CD4-positive, alpha-beta T cell (primary cell): ENCODE measurements at regions of chr6 and their contacts with region 1.

Region 1: GRCh38 chr6:28923318-28924102 is at the start of gene TRIM27:
- DNase-seq: peak; percentile 58 to 90 (median 74)
- ATAC-seq: peak; percentile 78
- H3K4me3 ChIP-seq: peak within 1 kb of the TSS; percentile 98
- H3K4me3 Mint-ChIP-seq: peak within 1 kb of the TSS; percentile 95
- H3K27ac ChIP-seq: peak within 1 kb of the TSS; percentile 67 to 80
- H3K27ac Mint-ChIP-seq: peak within 1 kb of the TSS; percentile 89
- H3K4me1 ChIP-seq: peaks cover 44% of the 10 kb centered on the region
- H3K4me1 Mint-ChIP-seq: peaks cover 42% of the 10 kb centered on the region
- H3K27me3 ChIP-seq: no peaks in the 10 kb centered on the region
- H3K27me3 Mint-ChIP-seq: no peaks in the 10 kb centered on the region
- CTCF ChIP-seq: no peak
- total RNA-seq, gene TRIM27: 11.5 to 13.2 TPM

Region 2: DNA sequence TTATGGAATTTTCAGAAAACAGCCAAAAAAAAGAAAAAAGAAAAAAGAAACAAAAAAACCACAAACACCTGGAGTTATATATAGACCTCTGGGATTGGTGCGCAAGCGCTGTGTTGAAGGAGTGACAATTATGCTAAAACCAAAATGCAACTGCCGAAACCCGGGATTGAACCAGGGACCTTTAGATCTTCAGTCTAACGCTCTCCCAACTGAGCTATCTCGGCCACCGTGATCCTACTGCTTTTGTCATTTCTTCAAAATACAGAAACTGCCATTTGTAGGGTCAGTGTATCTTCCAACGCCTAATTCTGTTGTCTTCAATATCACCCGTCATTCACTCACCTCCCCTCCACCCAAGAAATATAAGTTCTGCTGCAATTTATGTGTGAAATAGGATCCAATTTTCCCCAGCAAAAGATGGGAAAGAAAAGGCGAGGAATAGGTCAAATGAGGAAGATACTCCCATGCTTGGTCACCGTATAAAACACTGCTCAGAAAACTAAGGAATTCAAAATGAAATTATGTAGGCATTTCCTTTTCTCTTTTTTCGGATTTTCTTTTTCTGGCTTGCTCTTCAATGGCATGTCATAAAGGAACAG is 115.7 kb before region 1 on chr6:
- CTCF ChIA-PET with region 1: no interaction called
- POLR2A ChIA-PET with region 1: no interaction called
- intact Hi-C with region 1: no loop called
- DNase-seq: no peak
- ATAC-seq: no peak
- H3K4me3 ChIP-seq: no peak overlapping the region
- H3K4me3 Mint-ChIP-seq: peak overlapping the region; percentile 27
- H3K27ac ChIP-seq: no peak overlapping the region
- H3K27ac Mint-ChIP-seq: no peak overlapping the region
- H3K4me1 ChIP-seq: no peaks in the 10 kb centered on the region
- H3K4me1 Mint-ChIP-seq: no peaks in the 10 kb centered on the region
- H3K27me3 ChIP-seq: peaks cover 75 to 91% of the 10 kb centered on the region in 2 experiments
- H3K27me3 Mint-ChIP-seq: peaks cover 90% of the 10 kb centered on the region
- CTCF ChIP-seq: no peak

Region 3: DNA sequence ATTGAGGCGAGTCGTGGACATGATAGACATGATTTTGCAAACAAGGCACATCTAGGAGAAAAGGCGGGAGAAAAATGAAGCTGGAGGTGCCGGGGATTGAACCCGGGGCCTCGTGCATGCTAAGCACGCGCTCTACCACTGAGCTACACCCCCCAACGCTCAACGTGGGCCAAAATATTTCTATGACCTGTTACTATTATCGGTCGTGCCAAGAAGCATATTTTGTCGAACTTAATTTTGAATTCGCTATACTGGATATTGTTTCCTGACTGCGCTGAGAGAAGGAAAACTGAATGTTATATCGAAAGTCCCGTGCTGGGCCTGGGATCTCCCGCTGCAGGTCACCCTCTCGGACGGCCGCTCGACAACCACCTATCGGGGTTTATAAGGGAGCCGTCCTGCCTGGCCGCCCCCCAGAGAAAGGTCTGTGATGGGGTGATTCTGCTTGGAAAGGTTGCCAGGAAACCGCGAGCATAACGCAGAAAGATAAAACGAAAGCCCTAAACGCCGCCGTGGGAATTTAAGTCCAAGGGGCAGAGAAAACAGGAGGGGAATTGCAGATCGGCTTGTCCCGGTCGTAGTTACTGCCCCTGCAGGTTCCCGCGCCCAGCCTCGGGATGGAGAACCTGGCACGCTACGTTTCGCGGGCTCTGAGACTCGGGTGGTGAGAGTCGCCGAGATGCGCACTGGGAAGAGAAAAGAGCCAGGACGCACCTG is 59.7 kb before region 1 on chr6:
- CTCF ChIA-PET with region 1: no interaction called
- POLR2A ChIA-PET with region 1: interaction called, 70 read pairs
- intact Hi-C with region 1: loop called in 1 of 2 experiments (anchors 2 kb)
- DNase-seq: peak; percentile 69 to 93 (median 80)
- ATAC-seq: peak; percentile 39
- H3K4me3 ChIP-seq: peak overlapping the region; percentile 82
- H3K4me3 Mint-ChIP-seq: peak overlapping the region; percentile 88
- H3K27ac ChIP-seq: peak overlapping the region; percentile 30 to 47
- H3K27ac Mint-ChIP-seq: peak overlapping the region; percentile 93
- H3K4me1 ChIP-seq: peaks cover 34% of the 10 kb centered on the region
- H3K4me1 Mint-ChIP-seq: peaks cover 51% of the 10 kb centered on the region
- H3K27me3 ChIP-seq: no peaks in the 10 kb centered on the region
- H3K27me3 Mint-ChIP-seq: peaks cover 7% of the 10 kb centered on the region
- CTCF ChIP-seq: peak; percentile 10

Region 4: DNA sequence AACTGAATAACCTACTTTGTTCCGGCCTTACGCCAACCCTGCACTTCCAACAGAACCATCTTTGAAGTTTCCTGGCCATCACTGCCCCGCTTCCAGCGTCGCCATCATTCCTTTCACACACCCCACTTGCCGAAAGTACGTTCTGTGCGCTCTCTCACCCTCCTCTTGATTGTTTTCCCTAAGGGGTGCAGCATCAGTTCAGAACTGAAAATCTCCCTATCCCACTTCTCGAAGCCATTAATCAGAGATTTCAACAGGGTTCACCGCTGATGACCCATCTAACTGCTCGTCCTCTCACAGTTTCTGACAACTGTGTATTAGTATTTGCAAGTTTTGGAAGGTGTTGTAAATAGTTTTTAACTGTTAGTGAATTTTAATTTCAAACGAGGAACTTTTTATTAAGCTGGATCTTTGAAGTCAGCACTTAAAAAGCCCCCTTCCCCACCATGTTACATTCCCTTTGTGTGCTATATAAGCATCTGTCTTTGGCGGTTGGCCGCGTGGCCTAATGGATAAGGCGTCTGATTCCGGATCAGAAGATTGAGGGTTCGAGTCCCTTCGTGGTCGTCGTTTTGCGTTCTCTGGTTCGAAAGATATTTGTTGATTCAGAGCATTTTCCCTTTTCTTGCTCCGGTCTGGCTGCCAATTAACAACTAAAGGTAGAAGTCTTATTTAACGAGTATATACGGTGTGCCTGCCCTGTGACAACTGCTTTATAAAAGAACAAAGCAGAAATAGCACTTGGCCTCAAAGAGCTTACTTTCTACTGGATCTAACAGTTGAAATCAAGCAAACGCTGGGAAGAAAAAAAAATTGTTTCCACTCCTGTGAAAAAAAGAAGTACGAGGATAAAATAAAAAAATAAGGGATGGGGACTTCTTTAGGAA is 42.4 kb before region 1 on chr6:
- CTCF ChIA-PET with region 1: interaction called, 8 read pairs
- POLR2A ChIA-PET with region 1: interaction called, 29 read pairs
- intact Hi-C with region 1: no loop called
- DNase-seq: peak in 13 of 14 experiments; percentile 27 to 71 (median 43)
- ATAC-seq: no peak
- H3K4me3 ChIP-seq: peak overlapping the region; percentile 39
- H3K4me3 Mint-ChIP-seq: peak overlapping the region; percentile 77
- H3K27ac ChIP-seq: no peak overlapping the region
- H3K27ac Mint-ChIP-seq: peak overlapping the region; percentile 81
- H3K4me1 ChIP-seq: peaks cover 24% of the 10 kb centered on the region
- H3K4me1 Mint-ChIP-seq: peaks cover 39% of the 10 kb centered on the region
- H3K27me3 ChIP-seq: no peaks in the 10 kb centered on the region
- H3K27me3 Mint-ChIP-seq: peaks cover 7% of the 10 kb centered on the region
- CTCF ChIP-seq: no peak

Region 5: DNA sequence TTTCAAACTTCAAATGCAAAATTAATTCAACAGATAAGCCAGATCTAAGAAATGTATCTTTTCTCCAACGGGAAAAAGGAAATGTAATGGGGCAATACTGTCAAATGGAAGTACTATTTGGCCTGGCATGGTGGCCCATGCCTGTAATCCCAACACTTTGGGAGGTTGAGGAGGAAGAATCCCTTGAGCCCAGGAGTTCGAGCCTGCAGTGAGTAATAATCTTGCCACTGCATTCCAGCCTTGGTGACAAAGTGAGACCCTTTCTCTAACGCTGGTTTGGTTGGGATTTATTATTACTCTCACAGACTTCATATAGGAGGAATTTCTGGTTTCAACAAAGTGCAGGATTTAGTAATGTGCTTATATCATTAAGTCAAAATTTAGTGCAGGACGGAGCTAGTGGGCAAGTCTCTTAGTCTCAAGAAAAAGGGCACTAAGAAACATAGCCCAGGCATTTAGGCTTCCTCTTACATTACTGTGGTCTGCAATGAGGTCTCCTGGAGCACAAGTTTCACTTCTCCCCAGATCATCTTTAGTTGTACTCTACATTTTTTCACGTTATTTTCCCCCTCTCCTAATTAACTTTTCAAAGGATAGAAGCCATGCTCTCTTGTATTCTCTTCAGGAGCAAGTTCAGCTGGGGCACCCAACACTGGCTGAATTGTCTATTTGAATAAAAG is 22.8 kb before region 1 on chr6:
- CTCF ChIA-PET with region 1: interaction called, 6 read pairs
- POLR2A ChIA-PET with region 1: interaction called, 78 read pairs
- intact Hi-C with region 1: loop called (anchors 2 kb)
- DNase-seq: no peak
- ATAC-seq: no peak
- H3K4me3 ChIP-seq: no peak overlapping the region
- H3K4me3 Mint-ChIP-seq: no peak overlapping the region
- H3K27ac ChIP-seq: no peak overlapping the region
- H3K27ac Mint-ChIP-seq: no peak overlapping the region
- H3K4me1 ChIP-seq: peaks cover 12% of the 10 kb centered on the region
- H3K4me1 Mint-ChIP-seq: peaks cover 23% of the 10 kb centered on the region
- H3K27me3 ChIP-seq: no peaks in the 10 kb centered on the region
- H3K27me3 Mint-ChIP-seq: peaks cover 13% of the 10 kb centered on the region
- CTCF ChIP-seq: no peak

Region 6: GRCh38 chr6:28981833-28982475 is 58.4 kb after region 1 on chr6:
- CTCF ChIA-PET with region 1: interaction called, 3 read pairs
- POLR2A ChIA-PET with region 1: interaction called, 16 read pairs
- intact Hi-C with region 1: no loop called
- DNase-seq: peak; percentile 46 to 91 (median 64)
- ATAC-seq: peak; percentile 62
- H3K4me3 ChIP-seq: peak overlapping the region; percentile 88
- H3K4me3 Mint-ChIP-seq: peak overlapping the region; percentile 95
- H3K27ac ChIP-seq: no peak overlapping the region
- H3K27ac Mint-ChIP-seq: peak overlapping the region; percentile 98
- H3K4me1 ChIP-seq: peaks cover 28% of the 10 kb centered on the region
- H3K4me1 Mint-ChIP-seq: peaks cover 82% of the 10 kb centered on the region
- H3K27me3 ChIP-seq: peaks cover 0 to 15% of the 10 kb centered on the region in 2 experiments
- H3K27me3 Mint-ChIP-seq: peaks cover 64% of the 10 kb centered on the region
- CTCF ChIP-seq: no peak

Region 7: GRCh38 chr6:29016559-29017427 is 93.3 kb after region 1 on chr6:
- CTCF ChIA-PET with region 1: interaction called, 4 read pairs
- POLR2A ChIA-PET with region 1: interaction called, 14 read pairs
- intact Hi-C with region 1: no loop called
- DNase-seq: peak; percentile 71 to 91 (median 80)
- ATAC-seq: peak; percentile 66
- H3K4me3 ChIP-seq: peak overlapping the region; percentile 55
- H3K4me3 Mint-ChIP-seq: peak overlapping the region; percentile 87
- H3K27ac ChIP-seq: no peak overlapping the region
- H3K27ac Mint-ChIP-seq: peak overlapping the region; percentile 50
- H3K4me1 ChIP-seq: peaks cover 21% of the 10 kb centered on the region
- H3K4me1 Mint-ChIP-seq: peaks cover 16% of the 10 kb centered on the region
- H3K27me3 ChIP-seq: peaks cover 13 to 24% of the 10 kb centered on the region in 2 experiments
- H3K27me3 Mint-ChIP-seq: peaks cover 42% of the 10 kb centered on the region
- CTCF ChIP-seq: peak; percentile 95